ENCODE measurements at regions of chr3 and their contacts with region 1.

Region 1: DNA sequence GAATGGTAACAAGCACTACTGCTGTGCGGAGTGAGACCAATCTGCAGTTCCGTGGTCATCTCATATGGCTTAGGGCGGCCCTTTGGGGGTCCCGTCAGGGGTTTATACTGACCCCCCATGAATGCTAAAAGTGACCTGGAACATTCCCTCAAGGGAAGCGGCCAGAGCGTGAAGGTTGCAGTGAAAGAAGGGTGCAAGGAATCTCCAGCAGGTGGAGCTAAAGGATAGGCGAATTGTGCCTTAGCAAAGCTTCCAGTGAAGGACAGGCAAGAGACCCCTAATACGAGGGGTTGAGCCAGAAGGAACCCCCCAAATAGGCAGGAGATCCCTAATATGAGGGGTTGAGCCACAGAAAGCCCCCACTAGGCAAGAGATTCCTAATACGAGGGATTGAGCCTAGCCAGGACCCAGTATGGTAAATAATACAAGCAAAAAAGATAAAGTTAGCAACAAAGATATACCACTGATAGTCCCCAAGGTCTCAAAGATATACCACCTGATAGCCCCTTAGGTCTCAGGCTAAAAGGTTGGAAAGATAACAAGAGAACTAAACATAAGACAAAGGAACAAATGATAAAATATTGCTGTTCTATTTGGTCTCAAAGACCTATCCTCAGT is 32.8 kb downstream of the ZNF589 start:
- H3K4me3 ChIP-seq: no peak overlapping the region
- H3K27ac ChIP-seq: no peak overlapping the region
- H3K4me1 ChIP-seq: no peaks in the 10 kb centered on the region
- CTCF ChIP-seq: no peak

Region 2: GRCh38 chr3:48285132-48285531 is 11.4 kb after region 1 on chr3:
- CTCF ChIA-PET with region 1: interaction called, 11 read pairs
- POLR2A ChIA-PET with region 1: no interaction called
- H3K4me3 ChIP-seq: no peak overlapping the region
- H3K27ac ChIP-seq: no peak overlapping the region
- H3K4me1 ChIP-seq: no peaks in the 10 kb centered on the region
- CTCF ChIP-seq: no peak